ENCODE measurements at regions of chr6 and their contacts with region 1.

Region 1: DNA sequence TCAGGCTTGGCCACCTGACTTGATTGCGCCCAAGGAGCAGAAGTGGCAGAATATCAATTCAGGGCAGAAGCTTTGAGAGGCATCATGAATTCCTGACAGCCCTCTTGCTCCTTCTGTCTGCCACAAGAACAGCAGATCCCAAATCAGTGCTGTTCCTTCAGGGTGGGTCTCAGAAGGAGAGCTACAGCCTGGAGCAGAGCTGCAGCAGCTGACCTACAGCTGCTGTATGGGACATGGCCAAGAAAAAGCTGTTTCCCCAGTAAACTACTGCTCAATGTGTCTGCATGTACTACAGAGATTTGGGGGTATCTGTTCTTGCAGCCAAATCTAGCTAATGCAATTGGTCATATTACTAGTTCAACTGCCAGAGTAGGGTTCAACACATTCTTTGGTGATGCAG is 69.0 kb downstream of the SLC22A3 start:
- DNase-seq: no peak
- ATAC-seq: peak; percentile 73

Region 2: DNA sequence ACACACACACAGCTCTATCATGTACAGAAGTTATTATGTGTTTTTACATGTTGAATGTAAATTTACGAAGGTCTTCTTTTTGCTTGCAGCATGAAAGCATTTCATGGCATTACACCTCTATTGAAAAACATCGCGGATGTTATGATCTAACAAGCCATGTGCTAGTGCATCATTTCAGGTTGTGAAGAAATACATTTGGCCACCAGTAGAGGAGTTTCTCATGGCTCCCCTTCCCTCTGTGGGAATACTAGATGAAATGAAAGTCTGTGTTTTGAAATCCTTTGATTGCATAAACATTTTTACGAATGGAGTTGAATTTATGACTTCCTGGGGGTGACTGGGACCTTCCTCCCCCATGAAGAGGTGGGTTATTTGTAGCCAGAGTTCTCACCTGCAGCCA is 508.6 kb before region 1 on chr6:
- intact Hi-C with region 1: no loop called
- DNase-seq: no peak
- ATAC-seq: no peak

Region 3: DNA sequence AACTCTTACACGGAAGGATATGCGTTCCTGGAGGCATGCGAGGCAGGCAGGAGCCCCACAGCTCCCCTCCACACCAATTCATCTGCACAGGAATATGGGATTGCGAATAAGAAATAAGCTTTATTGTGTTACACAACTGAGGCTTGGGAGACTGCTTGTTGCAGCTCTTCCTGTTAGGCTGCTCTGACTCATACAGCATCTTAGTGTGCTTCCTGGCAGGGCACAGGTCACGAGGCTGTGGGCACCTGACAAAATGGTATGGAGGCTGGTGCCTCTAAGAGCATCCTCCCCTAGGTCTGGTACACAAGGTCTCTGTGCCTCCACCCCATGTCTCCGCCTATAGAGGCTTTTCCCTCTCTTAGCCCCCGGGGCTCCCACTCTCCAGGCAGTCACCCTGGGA is 62.1 kb before region 1 on chr6:
- intact Hi-C with region 1: loop called (anchors 5 kb)
- DNase-seq: no peak
- ATAC-seq: no peak

Measured in Right ventricle myocardium inferior (tissue), 1 donor.